OCI-LY7 (cell line): ENCODE measurements at regions of chr2 and their contacts with region 1.

Region 1: GRCh38 chr2:127270636-127271035 is 23.3 kb downstream of the ERCC3 start:
- DNase-seq: no peak
- H3K4me3 ChIP-seq: no peak overlapping the region
- H3K27ac ChIP-seq: no peak overlapping the region
- H3K4me1 ChIP-seq: no peaks in the 10 kb centered on the region
- CTCF ChIP-seq: peak; percentile 59

Region 2: GRCh38 chr2:127233710-127234109 is 36.9 kb before region 1 on chr2:
- CTCF ChIA-PET with region 1: no interaction called
- POLR2A ChIA-PET with region 1: no interaction called
- intact Hi-C with region 1: loop called (anchors 1 kb)
- DNase-seq: no peak
- H3K4me3 ChIP-seq: no peak overlapping the region
- H3K27ac ChIP-seq: no peak overlapping the region
- H3K4me1 ChIP-seq: no peaks in the 10 kb centered on the region
- CTCF ChIP-seq: no peak

Region 3: DNA sequence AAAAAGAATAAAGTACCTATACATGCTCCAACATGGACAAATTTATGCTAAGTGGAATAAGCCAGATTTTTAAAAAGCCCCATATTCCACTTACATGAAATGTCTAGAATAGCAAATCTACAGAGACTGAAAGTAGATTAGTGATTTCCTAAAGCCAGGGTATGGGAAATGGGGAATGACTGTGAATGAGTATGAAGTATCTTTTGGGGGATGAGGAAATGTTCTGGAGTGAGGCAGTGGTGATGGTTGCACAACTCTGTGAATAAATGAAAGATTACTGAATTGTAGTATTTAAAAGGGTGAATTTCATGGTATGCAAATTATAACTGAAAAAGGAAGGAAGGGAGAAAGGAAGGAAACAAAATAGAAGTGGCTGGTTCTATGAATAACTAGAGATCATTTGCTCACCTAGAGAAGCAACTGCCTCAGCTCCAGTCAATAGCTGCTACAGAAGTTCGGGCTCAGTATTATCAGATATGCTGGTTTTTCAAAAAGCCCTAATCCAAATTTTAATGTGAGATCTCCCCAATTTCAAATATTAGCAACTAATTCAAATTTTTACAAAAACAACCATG is 77.9 kb after region 1 on chr2:
- CTCF ChIA-PET with region 1: no interaction called
- POLR2A ChIA-PET with region 1: no interaction called
- intact Hi-C with region 1: no loop called
- DNase-seq: peak; percentile 22
- H3K4me3 ChIP-seq: no peak overlapping the region
- H3K27ac ChIP-seq: no peak overlapping the region
- H3K4me1 ChIP-seq: peaks cover 51% of the 10 kb centered on the region
- CTCF ChIP-seq: no peak

Region 4: DNA sequence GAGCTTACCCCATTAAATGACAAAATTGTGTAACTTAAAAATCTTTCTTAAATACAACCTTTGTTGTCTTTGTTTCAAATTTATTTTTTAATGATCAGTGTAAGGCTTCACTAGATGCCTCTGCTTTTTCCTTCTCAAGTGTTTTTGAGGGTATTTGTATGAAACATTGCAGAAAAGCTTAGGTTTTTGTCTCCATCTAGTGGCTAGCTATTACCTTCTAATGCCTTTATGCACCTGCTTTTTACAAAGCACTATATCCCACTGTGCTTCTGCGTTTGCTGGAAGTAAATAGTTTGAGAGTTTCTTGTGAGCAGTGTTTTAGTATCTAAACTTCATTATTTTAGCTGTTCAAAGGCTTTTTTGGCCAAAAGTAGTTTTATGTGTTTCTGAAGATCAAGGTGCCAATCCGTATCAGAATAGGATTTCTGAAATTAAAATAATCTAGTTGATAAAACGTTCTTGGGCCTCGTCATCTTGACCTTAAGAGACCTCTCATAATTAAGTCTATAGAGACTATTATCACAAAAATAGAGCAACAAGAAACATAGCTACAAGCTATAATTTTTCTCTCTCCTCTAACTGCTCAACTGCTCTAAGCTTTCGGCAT is 208.7 kb after region 1 on chr2:
- CTCF ChIA-PET with region 1: no interaction called
- POLR2A ChIA-PET with region 1: no interaction called
- intact Hi-C with region 1: no loop called
- DNase-seq: peak; percentile 71
- H3K4me3 ChIP-seq: no peak overlapping the region
- H3K27ac ChIP-seq: no peak overlapping the region
- H3K4me1 ChIP-seq: no peaks in the 10 kb centered on the region
- CTCF ChIP-seq: peak; percentile 95